GM12878 (cell line): ENCODE measurements at regions of chr1 and their contacts with region 1.

Region 1: GRCh38 chr1:67753776-67754525 is 69.0 kb downstream of the GADD45A start:
- DNase-seq: no peak
- ATAC-seq: peak; percentile 72
- H3K4me3 ChIP-seq: no peak overlapping the region
- H3K27ac ChIP-seq: no peak overlapping the region
- H3K4me1 ChIP-seq: peaks cover 27% of the 10 kb centered on the region
- H3K27me3 ChIP-seq: no peaks in the 10 kb centered on the region
- CTCF ChIP-seq: no peak
- EP300 ChIP-seq: 0 out of 4 replicates have a peak, but pooled peaks of 1 of the 2 experiments have one; percentile 36
- POLR2A ChIP-seq: no peak
- RAD21 ChIP-seq: no peak

Region 2: DNA sequence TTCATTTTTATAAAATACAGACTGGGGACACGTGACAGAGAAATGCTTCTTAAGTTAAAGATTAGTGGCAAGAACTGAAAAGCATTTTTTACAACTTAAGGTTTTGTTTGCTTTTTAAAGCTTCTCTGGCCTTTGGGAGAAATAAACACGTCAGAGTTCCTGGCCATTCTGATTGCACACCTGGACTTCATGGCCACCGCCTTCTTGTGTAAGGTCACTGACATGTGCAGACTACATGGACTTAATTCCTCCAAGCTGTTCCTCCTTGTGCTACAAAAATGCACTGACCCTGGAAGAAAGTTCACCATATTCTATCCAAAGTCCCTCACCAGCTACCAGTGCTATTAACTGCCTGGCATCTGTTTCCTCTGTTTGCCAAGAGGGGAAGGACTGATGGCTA is 12.8 kb before region 1 on chr1:
- CTCF ChIA-PET with region 1: interaction called, 25 read pairs
- POLR2A ChIA-PET with region 1: interaction called, 4 read pairs
- RAD21 ChIA-PET with region 1: interaction called, 11 read pairs
- SMC1A ChIA-PET with region 1: interaction called, 227 read pairs
- in situ Hi-C with region 1: no loop called
- intact Hi-C with region 1: no loop called
- DNase-seq: no peak
- ATAC-seq: no peak
- H3K4me3 ChIP-seq: no peak overlapping the region
- H3K27ac ChIP-seq: no peak overlapping the region
- H3K4me1 ChIP-seq: peaks cover 8% of the 10 kb centered on the region
- H3K27me3 ChIP-seq: no peaks in the 10 kb centered on the region
- CTCF ChIP-seq: no peak
- EP300 ChIP-seq: no peak
- POLR2A ChIP-seq: no peak
- RAD21 ChIP-seq: no peak

Region 3: DNA sequence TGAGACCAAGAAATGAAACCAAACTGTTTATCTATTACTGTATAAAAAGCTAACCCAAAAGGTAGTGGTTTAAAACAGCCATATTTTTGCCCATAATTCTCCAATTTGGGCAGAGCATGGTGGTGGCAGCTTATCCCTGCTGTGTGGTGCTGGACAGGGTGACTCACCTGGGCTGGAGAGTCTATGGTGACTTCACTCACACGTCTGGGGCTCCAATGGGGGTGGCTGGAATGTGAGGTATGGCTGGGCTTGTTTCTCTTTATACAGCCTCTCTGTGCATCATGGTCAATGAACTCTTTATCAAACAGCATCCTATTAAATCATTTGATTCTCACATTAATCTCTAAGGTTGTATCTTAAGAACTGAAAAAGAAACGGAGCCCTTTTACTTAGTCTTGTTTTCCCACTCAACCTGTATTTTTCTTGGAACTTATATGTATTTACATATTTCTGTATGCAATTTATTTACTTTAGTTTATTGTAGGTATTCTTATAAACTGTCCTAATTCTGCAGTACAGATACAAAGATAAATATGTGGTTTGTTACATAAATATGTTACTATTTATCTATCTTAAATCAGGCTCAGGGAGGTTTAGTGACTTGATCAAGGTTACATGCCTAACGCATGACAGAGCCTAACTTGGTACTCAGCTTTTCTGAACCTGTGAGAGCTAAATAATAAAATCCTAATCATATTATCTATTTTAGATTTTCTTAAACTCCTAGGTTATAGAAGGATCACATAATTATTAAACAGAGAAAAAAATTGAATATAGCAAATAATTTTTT is 515.9 kb after region 1 on chr1:
- CTCF ChIA-PET with region 1: no interaction called
- POLR2A ChIA-PET with region 1: no interaction called
- RAD21 ChIA-PET with region 1: no interaction called
- SMC1A ChIA-PET with region 1: no interaction called
- in situ Hi-C with region 1: no loop called
- intact Hi-C with region 1: no loop called
- DNase-seq: no peak
- ATAC-seq: no peak
- H3K4me3 ChIP-seq: no peak overlapping the region
- H3K27ac ChIP-seq: no peak overlapping the region
- H3K4me1 ChIP-seq: no peaks in the 10 kb centered on the region
- H3K27me3 ChIP-seq: no peaks in the 10 kb centered on the region
- CTCF ChIP-seq: no peak
- EP300 ChIP-seq: no peak
- POLR2A ChIP-seq: no peak
- RAD21 ChIP-seq: no peak